Mammary epithelial cell (primary cell): ENCODE measurements at regions of chr11 and their contacts with region 1.

Region 1: GRCh38 chr11:22625448-22626287 is at the start of gene FANCF:
- DNase-seq: peak; percentile 100
- H3K4me3 ChIP-seq: peak within 1 kb of the TSS; percentile 67 to 92 (median 83)
- H3K27ac ChIP-seq: peak within 1 kb of the TSS; percentile 77
- H3K4me1 ChIP-seq: peaks cover 10% of the 10 kb centered on the region
- H3K27me3 ChIP-seq: no peaks in the 10 kb centered on the region
- CTCF ChIP-seq: no peak
- total RNA-seq, gene FANCF: 9.9 to 14.3 TPM

Region 2: DNA sequence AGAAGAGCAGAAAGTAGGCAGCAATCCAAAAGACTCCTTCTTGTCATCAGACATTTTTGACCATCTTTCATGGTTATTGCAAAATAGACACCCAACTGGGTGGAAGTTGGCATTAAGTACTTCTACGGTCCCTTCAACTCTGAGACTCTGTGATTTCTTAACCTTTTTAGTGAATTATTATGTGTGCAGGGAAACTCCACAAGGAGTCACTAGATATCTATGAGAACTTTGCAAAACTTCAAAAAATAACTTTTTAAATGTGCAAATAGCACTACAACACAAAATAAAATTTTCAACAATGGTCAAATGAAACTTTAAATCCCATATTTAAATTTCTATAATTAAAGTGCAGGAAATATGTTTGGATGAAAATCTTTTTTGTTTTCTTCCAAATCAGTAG is 198.8 kb before region 1 on chr11:
- CTCF ChIA-PET with region 1: no interaction called
- dilution Hi-C with region 1: no loop called
- in situ Hi-C with region 1: no loop called
- intact Hi-C with region 1: loop called (anchors 10 kb)
- DNase-seq: no peak
- H3K4me3 ChIP-seq: no peak overlapping the region
- H3K27ac ChIP-seq: no peak overlapping the region
- H3K4me1 ChIP-seq: no peaks in the 10 kb centered on the region
- H3K27me3 ChIP-seq: no peaks in the 10 kb centered on the region
- CTCF ChIP-seq: peak in 1 of 2 donors; percentile 49

Region 3: DNA sequence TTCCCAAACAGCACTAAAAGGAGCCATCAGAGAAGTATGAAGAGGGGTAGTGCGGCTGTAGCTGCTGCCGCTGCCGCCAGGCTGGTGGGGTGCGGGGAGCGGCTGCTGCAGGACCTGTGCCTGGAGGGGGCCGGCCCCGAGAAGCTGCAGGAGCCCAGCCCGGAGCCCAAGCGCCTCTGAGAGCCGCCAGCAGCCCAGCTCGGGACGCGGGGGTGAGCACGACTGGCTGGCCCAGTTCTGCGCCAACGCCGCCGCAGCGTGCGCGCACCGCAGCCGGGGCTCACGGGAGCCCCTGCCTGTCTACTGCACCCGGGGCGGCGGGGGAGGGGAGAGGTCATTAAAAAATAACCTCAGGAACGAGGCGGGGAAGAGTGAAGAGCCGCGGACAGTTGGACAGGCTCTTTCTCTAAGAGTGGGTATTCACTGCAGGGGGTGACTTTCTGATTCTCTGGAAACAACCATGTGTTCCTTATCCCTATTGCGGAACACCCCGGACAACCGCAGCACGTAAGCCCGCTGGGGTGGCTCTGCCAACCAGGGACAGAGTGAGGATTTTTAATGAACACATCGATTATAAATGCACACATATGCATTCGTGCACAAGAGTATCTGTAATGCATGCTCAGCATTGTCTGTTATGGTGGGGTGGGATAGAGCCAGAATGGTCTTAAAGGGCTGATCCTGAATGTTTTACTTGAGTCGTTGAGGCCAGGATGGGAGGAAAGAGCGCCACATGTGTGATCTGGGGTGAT is 41.2 kb after region 1 on chr11:
- CTCF ChIA-PET with region 1: no interaction called
- dilution Hi-C with region 1: no loop called
- in situ Hi-C with region 1: no loop called
- intact Hi-C with region 1: no loop called
- DNase-seq: no peak
- H3K4me3 ChIP-seq: peak overlapping the region; percentile 5 to 34 (median 14)
- H3K27ac ChIP-seq: no peak overlapping the region
- H3K4me1 ChIP-seq: no peaks in the 10 kb centered on the region
- H3K27me3 ChIP-seq: peaks cover 21% of the 10 kb centered on the region
- CTCF ChIP-seq: no peak

Region 4: GRCh38 chr11:23353611-23354010 is 727.9 kb after region 1 on chr11:
- CTCF ChIA-PET with region 1: no interaction called
- dilution Hi-C with region 1: no loop called
- in situ Hi-C with region 1: no loop called
- intact Hi-C with region 1: no loop called
- DNase-seq: no peak
- H3K4me3 ChIP-seq: no peak overlapping the region
- H3K27ac ChIP-seq: no peak overlapping the region
- H3K4me1 ChIP-seq: no peaks in the 10 kb centered on the region
- H3K27me3 ChIP-seq: no peaks in the 10 kb centered on the region
- CTCF ChIP-seq: no peak